CD8-positive, alpha-beta T cell (primary cell): ENCODE measurements at regions of chr2 and their contacts with region 1.

Region 1: DNA sequence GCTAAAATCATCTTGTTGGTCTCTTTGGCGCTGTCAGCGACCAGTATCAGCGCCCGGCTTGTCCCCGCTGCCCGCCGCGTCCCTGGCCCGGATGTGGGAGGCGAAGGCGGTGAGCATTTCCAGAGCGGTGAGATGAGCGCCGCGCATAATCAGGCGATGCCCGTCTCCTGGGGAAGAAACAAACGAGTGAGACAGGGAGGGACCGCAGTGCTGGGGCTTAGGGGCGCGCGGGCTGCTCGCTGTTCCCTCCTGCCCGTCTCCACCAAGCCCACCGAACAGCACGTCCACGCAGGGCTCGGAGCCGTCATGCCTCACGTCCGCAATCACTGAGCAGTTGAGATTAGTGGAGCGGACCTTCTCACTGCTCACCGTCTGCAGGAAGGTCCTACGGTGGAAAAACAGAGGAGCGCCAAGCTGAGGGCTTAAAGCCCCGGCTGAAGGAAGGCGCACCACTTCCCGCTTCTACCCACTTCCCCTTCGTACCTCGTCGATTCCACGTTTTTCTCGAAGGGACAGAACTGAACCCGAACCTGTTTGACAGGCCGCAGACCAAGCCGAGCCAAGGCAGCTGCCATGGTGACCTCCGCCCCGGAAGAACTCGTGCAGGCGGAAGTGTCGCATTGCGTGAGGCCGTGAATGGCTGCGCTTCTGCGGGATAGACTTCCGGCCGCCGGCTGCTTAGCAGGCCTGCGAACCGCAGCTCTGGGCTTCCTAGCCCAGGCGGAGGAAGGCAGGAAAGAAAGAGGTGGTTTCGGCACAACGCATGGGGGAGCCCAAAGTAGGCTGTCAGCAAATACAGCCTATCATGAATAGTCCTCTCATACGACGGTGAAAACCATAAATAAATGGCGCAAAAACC is at the start of gene MRPL53:
- DNase-seq: peak; percentile 90 to 99 (median 98)
- ATAC-seq: peak; percentile 89
- H3K4me3 ChIP-seq: peak within 1 kb of the TSS; percentile 69 to 95
- H3K4me3 Mint-ChIP-seq: peak within 1 kb of the TSS; percentile 97
- H3K27ac ChIP-seq: peak within 1 kb of the TSS; percentile 78 to 94
- H3K27ac Mint-ChIP-seq: peak within 1 kb of the TSS; percentile 99
- H3K4me1 ChIP-seq: peaks cover 21% of the 10 kb centered on the region
- H3K4me1 Mint-ChIP-seq: peaks cover 23% of the 10 kb centered on the region
- H3K27me3 ChIP-seq: no peaks in the 10 kb centered on the region
- H3K27me3 Mint-ChIP-seq: no peaks in the 10 kb centered on the region
- CTCF ChIP-seq: no peak
- total RNA-seq, gene MRPL53: 48.6 to 59.0 TPM

Region 2: GRCh38 chr2:74421221-74421870 is 51.0 kb before region 1 on chr2 and contains the starts of genes C2orf81 and WDR54:
- CTCF ChIA-PET with region 1: no interaction called
- POLR2A ChIA-PET with region 1: interaction called, 5 read pairs
- intact Hi-C with region 1: loop called in 1 of 2 experiments (anchors 1 kb)
- DNase-seq: peak; percentile 90 to 98 (median 95)
- ATAC-seq: peak; percentile 88
- H3K4me3 ChIP-seq: peak within 1 kb of the TSS; percentile 72 to 92
- H3K4me3 Mint-ChIP-seq: peak within 1 kb of the TSS; percentile 98
- H3K27ac ChIP-seq: peak within 1 kb of the TSS; percentile 96 to 97
- H3K27ac Mint-ChIP-seq: peak within 1 kb of the TSS; percentile 96
- H3K4me1 ChIP-seq: peaks cover 20% of the 10 kb centered on the region
- H3K4me1 Mint-ChIP-seq: peaks cover 17% of the 10 kb centered on the region
- H3K27me3 ChIP-seq: no peaks in the 10 kb centered on the region
- H3K27me3 Mint-ChIP-seq: no peaks in the 10 kb centered on the region
- CTCF ChIP-seq: no peak
- total RNA-seq, gene C2orf81: 0.75 to 1.8 TPM
- total RNA-seq, gene WDR54: 18.4 to 19.8 TPM

Region 3: GRCh38 chr2:74458132-74458925 is 14.0 kb before region 1 on chr2 and contains the start of gene WBP1:
- CTCF ChIA-PET with region 1: interaction called, 9 read pairs
- POLR2A ChIA-PET with region 1: interaction called, 110 read pairs
- intact Hi-C with region 1: loop called (anchors 1 kb)
- DNase-seq: peak; percentile 96 to 100 (median 98)
- ATAC-seq: peak; percentile 77
- H3K4me3 ChIP-seq: peak within 1 kb of the TSS; percentile 84 to 95
- H3K4me3 Mint-ChIP-seq: peak within 1 kb of the TSS; percentile 97
- H3K27ac ChIP-seq: peak within 1 kb of the TSS; percentile 93 to 100
- H3K27ac Mint-ChIP-seq: peak within 1 kb of the TSS; percentile 99
- H3K4me1 ChIP-seq: peaks cover 34% of the 10 kb centered on the region
- H3K4me1 Mint-ChIP-seq: peaks cover 57% of the 10 kb centered on the region
- H3K27me3 ChIP-seq: no peaks in the 10 kb centered on the region
- H3K27me3 Mint-ChIP-seq: no peaks in the 10 kb centered on the region
- CTCF ChIP-seq: no peak
- total RNA-seq, gene WBP1: 68.5 to 70.6 TPM